ENCODE measurements at regions of chr2 and their contacts with region 1.

Region 1: GRCh38 chr2:218568190-218569037 is at the starts of genes CNOT9 and USP37:
- DNase-seq: peak; percentile 100
- ATAC-seq: peak; percentile 92
- H3K4me3 Mint-ChIP-seq: peak within 1 kb of the TSS; percentile 97
- H3K27ac Mint-ChIP-seq: peak within 1 kb of the TSS; percentile 99
- H3K4me1 Mint-ChIP-seq: peaks cover 45% of the 10 kb centered on the region
- H3K27me3 Mint-ChIP-seq: no peaks in the 10 kb centered on the region
- CTCF ChIP-seq: no peak
- total RNA-seq, gene CNOT9: 60.5 and 74.4 TPM in 2 replicates
- total RNA-seq, gene USP37: 14.3 and 23.1 TPM in 2 replicates

Region 2: GRCh38 chr2:218216674-218217359 is 351.6 kb before region 1 on chr2 and contains the start of gene ARPC2:
- CTCF ChIA-PET with region 1: no interaction called
- POLR2A ChIA-PET with region 1: interaction called, 5 read pairs
- intact Hi-C with region 1: loop called (anchors 2 kb)
- DNase-seq: peak; percentile 95
- ATAC-seq: peak; percentile 63
- H3K4me3 Mint-ChIP-seq: peak within 1 kb of the TSS; percentile 98
- H3K27ac Mint-ChIP-seq: peak within 1 kb of the TSS; percentile 99
- H3K4me1 Mint-ChIP-seq: peaks cover 45% of the 10 kb centered on the region
- H3K27me3 Mint-ChIP-seq: no peaks in the 10 kb centered on the region
- CTCF ChIP-seq: no peak
- total RNA-seq, gene ARPC2: 711 and 737 TPM in 2 replicates

Region 3: GRCh38 chr2:218245214-218245613 is 323.2 kb before region 1 on chr2:
- CTCF ChIA-PET with region 1: no interaction called
- POLR2A ChIA-PET with region 1: no interaction called
- intact Hi-C with region 1: no loop called
- DNase-seq: no peak
- ATAC-seq: no peak
- H3K4me3 Mint-ChIP-seq: no peak overlapping the region
- H3K27ac Mint-ChIP-seq: peak overlapping the region; percentile 18
- H3K4me1 Mint-ChIP-seq: no peaks in the 10 kb centered on the region
- H3K27me3 Mint-ChIP-seq: no peaks in the 10 kb centered on the region
- CTCF ChIP-seq: no peak

Region 4: GRCh38 chr2:218286570-218287459 is 281.6 kb before region 1 on chr2:
- CTCF ChIA-PET with region 1: no interaction called
- POLR2A ChIA-PET with region 1: interaction called, 3 read pairs
- intact Hi-C with region 1: loop called (anchors 2 kb)
- DNase-seq: peak; percentile 63
- ATAC-seq: peak; percentile 73
- H3K4me3 Mint-ChIP-seq: peak overlapping the region; percentile 77
- H3K27ac Mint-ChIP-seq: peak overlapping the region; percentile 94
- H3K4me1 Mint-ChIP-seq: peaks cover 91% of the 10 kb centered on the region
- H3K27me3 Mint-ChIP-seq: no peaks in the 10 kb centered on the region
- CTCF ChIP-seq: no peak

Region 5: DNA sequence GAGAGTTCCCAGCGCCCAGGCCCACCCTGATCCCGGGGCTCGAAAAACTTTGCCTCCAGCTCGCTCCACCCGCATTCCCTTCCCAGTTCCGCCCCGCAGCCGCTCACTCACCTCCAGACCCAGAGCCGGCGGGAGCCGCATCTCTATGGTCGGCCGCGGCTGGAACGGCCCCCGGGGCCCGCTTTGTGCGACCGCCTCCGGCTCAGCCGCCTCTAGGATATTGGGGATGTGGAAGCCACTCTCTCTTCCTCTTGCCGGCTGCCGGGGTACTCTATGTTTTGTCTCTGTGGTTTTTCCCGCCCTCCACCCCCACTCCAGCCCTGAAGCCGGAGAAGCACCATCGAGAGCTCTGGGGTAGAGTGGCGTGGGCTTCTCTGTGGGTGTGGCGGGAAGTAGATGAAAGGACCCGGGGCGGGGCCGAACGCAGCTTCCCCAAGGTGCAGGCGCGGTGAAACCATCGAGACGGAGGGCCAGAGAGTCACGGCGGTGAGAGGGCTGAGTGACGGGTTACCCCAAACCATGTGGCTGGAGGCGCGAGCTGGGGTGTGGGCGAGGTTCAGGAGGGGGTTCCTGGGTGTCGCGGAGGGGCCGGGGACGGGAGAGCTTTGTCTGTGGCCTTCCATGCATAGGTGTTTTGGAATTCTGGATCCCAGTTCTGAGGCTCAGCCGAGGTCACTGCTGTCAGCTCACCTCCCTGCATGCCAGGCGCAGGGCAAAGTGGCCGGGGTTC is 91.0 kb after region 1 on chr2 and contains the starts of genes BCS1L and ZNF142:
- CTCF ChIA-PET with region 1: no interaction called
- POLR2A ChIA-PET with region 1: interaction called, 3 read pairs
- intact Hi-C with region 1: loop called (anchors 1 kb)
- DNase-seq: peak; percentile 85
- ATAC-seq: peak; percentile 96
- H3K4me3 Mint-ChIP-seq: peak within 1 kb of the TSS; percentile 99
- H3K27ac Mint-ChIP-seq: peak within 1 kb of the TSS; percentile 93
- H3K4me1 Mint-ChIP-seq: peaks cover 31% of the 10 kb centered on the region
- H3K27me3 Mint-ChIP-seq: no peaks in the 10 kb centered on the region
- CTCF ChIP-seq: no peak
- total RNA-seq, gene BCS1L: 66.9 and 75.1 TPM in 2 replicates
- total RNA-seq, gene ZNF142: 44.9 and 63.6 TPM in 2 replicates

Region 6: GRCh38 chr2:218898109-218898878 is 329.9 kb after region 1 on chr2:
- CTCF ChIA-PET with region 1: no interaction called
- POLR2A ChIA-PET with region 1: no interaction called
- intact Hi-C with region 1: loop called (anchors 2 kb)
- DNase-seq: peak; percentile 88
- ATAC-seq: peak; percentile 22
- H3K4me3 Mint-ChIP-seq: peak overlapping the region; percentile 85
- H3K27ac Mint-ChIP-seq: peak overlapping the region; percentile 84
- H3K4me1 Mint-ChIP-seq: peaks cover 47% of the 10 kb centered on the region
- H3K27me3 Mint-ChIP-seq: peaks cover 22% of the 10 kb centered on the region
- CTCF ChIP-seq: peak; percentile 97

Region 7: GRCh38 chr2:219498280-219499057 is 930.1 kb after region 1 on chr2 and contains the start of gene GMPPA:
- CTCF ChIA-PET with region 1: no interaction called
- POLR2A ChIA-PET with region 1: no interaction called
- intact Hi-C with region 1: loop called (anchors 2 kb)
- DNase-seq: peak; percentile 86
- ATAC-seq: peak; percentile 94
- H3K4me3 Mint-ChIP-seq: peak within 1 kb of the TSS; percentile 98
- H3K27ac Mint-ChIP-seq: peak within 1 kb of the TSS; percentile 86
- H3K4me1 Mint-ChIP-seq: peaks cover 34% of the 10 kb centered on the region
- H3K27me3 Mint-ChIP-seq: peaks cover 28% of the 10 kb centered on the region
- CTCF ChIP-seq: no peak
- total RNA-seq, gene GMPPA: 32.9 and 33.0 TPM in 2 replicates

Region 8: DNA sequence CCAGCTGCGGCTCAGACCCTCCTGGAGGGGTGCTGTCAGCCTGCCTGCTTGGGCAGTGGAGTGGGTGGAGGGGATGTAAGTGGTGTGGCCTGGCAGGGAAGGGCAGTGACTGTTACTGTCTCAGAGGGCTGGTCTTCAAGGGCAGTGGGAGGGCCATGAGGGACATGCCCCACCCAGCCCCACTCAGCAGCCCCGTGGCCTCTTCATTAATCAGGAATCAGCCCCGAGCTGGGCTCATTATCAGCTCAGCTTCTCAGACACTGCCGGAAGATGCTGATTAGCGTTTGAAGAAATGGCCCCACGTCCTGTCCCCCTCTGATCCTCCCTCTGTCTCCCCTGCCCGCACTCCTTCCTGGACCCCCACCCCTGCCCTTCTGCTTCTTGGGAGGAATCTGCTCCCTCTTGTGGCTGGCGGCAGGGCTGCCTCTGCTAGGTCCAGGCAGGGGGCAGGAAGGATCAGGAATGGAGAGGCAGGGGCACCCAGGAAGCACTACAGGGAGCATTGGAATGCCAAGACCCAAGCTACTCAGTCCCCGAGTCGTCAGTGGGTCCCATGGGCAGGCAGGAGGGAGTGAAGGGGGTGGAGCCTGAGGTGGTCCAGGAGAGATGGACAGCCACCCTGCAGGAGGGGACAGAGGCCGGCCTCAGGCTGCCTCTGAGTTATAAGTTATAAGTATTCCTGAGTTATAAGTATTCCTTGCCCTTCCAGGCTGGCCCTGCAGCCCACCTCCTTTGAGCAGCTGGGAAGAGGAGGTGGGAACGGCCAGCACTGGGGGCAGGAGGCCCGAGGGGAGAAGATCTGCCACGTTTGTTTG is 952.9 kb after region 1 on chr2:
- CTCF ChIA-PET with region 1: no interaction called
- POLR2A ChIA-PET with region 1: no interaction called
- intact Hi-C with region 1: no loop called
- DNase-seq: no peak
- ATAC-seq: no peak
- H3K4me3 Mint-ChIP-seq: no peak overlapping the region
- H3K27ac Mint-ChIP-seq: no peak overlapping the region
- H3K4me1 Mint-ChIP-seq: peaks cover 17% of the 10 kb centered on the region
- H3K27me3 Mint-ChIP-seq: peaks cover 78% of the 10 kb centered on the region
- CTCF ChIP-seq: no peak